ENCODE measurements at regions of chr18 and their contacts with region 1.

Region 1: DNA sequence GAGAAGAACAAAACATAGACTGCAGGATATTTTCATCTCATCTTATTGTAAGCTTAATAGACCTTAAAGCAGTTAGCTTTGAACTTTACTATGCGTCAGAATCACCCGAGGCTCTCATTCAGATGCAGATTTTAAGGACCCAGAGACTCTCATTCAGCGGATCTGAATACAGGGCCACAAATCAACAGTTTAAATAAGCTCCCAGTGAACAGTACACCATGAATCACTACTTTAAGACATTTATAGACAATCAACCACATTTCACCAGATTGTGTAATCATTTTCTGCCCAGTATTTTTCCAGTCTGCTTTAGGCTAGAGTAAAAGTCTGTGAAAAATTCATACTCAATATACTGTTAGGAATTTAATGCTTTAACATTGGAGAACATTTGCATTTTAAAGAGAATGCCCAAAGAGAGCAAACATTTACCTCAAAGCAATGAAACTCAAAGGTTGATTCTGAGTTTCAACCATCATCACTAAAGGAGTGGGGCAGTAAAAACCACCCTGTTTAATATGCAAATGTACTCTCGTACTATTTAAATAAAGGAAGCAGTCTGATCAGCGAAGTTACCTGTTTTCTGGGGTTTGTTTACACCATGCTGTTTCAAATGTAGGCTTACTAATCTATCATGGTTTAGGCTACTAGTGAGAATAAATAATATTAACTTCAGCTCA is 11.0 kb upstream of the ALPK2 start:
- DNase-seq: no peak
- H3K4me3 ChIP-seq: no peak overlapping the region
- CTCF ChIP-seq: no peak

Region 2: GRCh38 chr18:58584200-58585127 is 55.4 kb before region 1 on chr18:
- in situ Hi-C with region 1: loop called (anchors 5 kb)
- DNase-seq: peak; percentile 75
- H3K4me3 ChIP-seq: no peak overlapping the region
- CTCF ChIP-seq: peak; percentile 6

Region 3: DNA sequence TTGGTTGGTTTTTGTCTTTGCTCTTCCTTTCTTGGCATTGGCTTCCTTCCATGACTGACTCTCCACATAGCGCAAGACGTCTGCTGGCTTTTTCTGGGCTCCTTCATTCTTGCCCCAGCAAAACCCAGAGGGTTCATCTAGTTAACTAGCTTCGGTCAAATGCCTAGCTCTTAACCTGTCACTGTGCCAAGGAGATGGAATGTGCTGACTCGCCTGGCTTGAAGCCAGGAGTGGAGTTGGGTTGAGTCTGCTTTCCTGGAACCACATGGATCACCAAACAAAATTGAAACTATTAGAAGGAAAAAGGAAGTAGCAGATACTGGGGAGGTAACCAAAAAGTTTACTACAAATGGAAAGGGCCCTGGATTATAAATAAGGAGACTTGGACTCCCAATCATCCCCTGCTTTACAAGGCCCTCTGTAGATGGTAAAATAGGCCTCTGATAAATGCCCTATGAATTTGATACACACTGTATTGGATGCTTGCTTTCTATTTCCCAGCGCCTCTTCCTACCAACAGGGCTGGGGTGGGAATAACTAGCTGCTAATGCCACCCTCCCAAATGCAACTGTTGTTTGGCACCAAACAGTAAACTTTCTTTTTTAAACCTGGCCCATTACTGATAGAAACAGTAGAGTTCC is 42.7 kb after region 1 on chr18:
- in situ Hi-C with region 1: no loop called
- DNase-seq: peak; percentile 82
- H3K4me3 ChIP-seq: no peak overlapping the region
- CTCF ChIP-seq: no peak